Spleen (tissue), 13 donors: ENCODE measurements at regions of chr20 and their contacts with region 1.

Region 1: GRCh38 chr20:25065625-25066338 is 7.8 kb upstream of the ACSS1 start:
- DNase-seq: peak; percentile 82
- H3K4me3 ChIP-seq: peak overlapping the region in 1 of 8 donors; percentile 5
- H3K27ac ChIP-seq: no peak overlapping the region
- H3K4me1 ChIP-seq: peaks cover 0 to 15% (median 8%) of the 10 kb centered on the region in 6 donors
- H3K27me3 ChIP-seq: peaks cover 0 to 35% (median 3%) of the 10 kb centered on the region in 7 donors
- CTCF ChIP-seq: peak; percentile 70 to 91 (median 83)
- POLR2A ChIP-seq: no peak

Region 2: GRCh38 chr20:24948939-24949679 is 116.7 kb before region 1 on chr20 and contains the start of gene CST7:
- intact Hi-C with region 1: no loop called
- DNase-seq: peak; percentile 96
- H3K4me3 ChIP-seq: peak within 1 kb of the TSS; percentile 0 to 77 (median 44)
- H3K27ac ChIP-seq: peak within 1 kb of the TSS; percentile 39 to 97 (median 92)
- H3K4me1 ChIP-seq: peaks cover 0 to 53% (median 14%) of the 10 kb centered on the region in 6 donors
- H3K27me3 ChIP-seq: peaks cover 0 to 28% (median 0%) of the 10 kb centered on the region in 7 donors
- CTCF ChIP-seq: no peak
- POLR2A ChIP-seq: no peak
- total RNA-seq, gene CST7: 51.4 to 298 (median 95.5) TPM

Region 3: GRCh38 chr20:24992487-24993205 is 73.1 kb before region 1 on chr20 and contains the start of gene APMAP:
- intact Hi-C with region 1: loop called (anchors 2 kb)
- DNase-seq: peak; percentile 99
- H3K4me3 ChIP-seq: peak within 1 kb of the TSS; percentile 66 to 88 (median 73)
- H3K27ac ChIP-seq: peak within 1 kb of the TSS; percentile 75 to 97 (median 96)
- H3K4me1 ChIP-seq: peaks cover 12 to 72% (median 46%) of the 10 kb centered on the region in 6 donors
- H3K27me3 ChIP-seq: no peaks in the 10 kb centered on the region
- CTCF ChIP-seq: peak in 1 of 11 experiments; percentile 15
- POLR2A ChIP-seq: peak; percentile 38 to 90 (median 76)
- total RNA-seq, gene APMAP: 57.9 to 104 (median 78.8) TPM

Region 4: GRCh38 chr20:25237610-25238318 is 172.0 kb after region 1 on chr20:
- intact Hi-C with region 1: no loop called
- DNase-seq: no peak
- H3K4me3 ChIP-seq: no peak overlapping the region
- H3K27ac ChIP-seq: no peak overlapping the region
- H3K4me1 ChIP-seq: no peaks in the 10 kb centered on the region
- H3K27me3 ChIP-seq: peaks cover 0 to 63% (median 9%) of the 10 kb centered on the region in 7 donors
- CTCF ChIP-seq: no peak
- POLR2A ChIP-seq: no peak